ENCODE measurements at regions of chr12 and their contacts with region 1.

Region 1: GRCh38 chr12:95072900-95073697 is at the start of gene NR2C1:
- DNase-seq: peak; percentile 80 to 94 (median 92)
- H3K4me3 ChIP-seq: peak within 1 kb of the TSS; percentile 65 to 99 (median 94)
- H3K27ac ChIP-seq: peak within 1 kb of the TSS; percentile 51 to 98 (median 90)
- H3K27me3 ChIP-seq: no peaks in the 10 kb centered on the region
- CTCF ChIP-seq: no peak
- total RNA-seq, gene NR2C1: 38.6 to 107 (median 57.8) TPM

Region 2: DNA sequence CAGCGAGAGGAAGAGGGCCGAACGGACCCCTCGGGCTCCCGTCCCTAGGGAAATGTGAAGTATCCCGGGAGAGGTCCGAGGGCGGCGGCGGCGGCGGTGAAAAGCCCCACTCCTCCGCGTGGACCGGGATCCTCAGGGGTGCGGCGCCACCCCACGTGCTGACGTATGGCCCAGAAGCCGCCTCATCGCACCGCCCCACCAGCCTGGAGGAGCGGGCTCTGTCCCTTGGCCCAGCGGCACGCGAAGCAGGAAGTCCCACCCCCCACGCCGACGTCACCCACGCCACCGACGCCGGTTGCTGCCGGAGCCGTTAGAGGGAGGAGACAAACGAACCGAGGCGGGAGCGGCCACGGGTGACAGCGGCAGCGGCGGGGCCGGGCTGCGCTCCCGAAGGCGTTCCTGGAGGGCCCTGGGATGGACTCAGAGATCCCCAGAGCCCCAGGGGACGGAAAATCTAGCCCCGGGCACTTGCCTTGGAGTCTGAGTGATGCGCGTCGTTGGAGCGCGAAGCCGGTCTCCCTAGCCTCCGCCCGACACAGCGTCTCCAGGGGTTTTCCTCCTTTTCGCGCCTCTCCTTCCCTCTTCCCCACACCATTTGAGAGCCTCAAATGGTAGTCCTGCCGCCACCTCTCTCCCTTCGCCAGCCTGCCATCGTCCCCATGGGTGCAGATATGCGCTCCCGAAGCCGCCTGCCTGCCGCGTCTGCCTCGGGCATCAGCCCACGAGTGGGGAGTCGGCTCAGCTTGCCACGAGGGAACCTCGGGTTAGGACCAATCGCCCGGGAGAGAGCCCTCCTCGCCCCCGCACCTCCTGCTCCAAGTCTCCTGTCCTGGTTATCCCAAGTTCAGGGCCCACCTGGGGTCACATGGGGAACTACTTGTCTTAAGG is 613.1 kb before region 1 on chr12 and contains the start of gene CEP83:
- intact Hi-C with region 1: loop called in 1 of 2 experiments (anchors 1 kb)
- DNase-seq: peak; percentile 93 to 99 (median 96)
- H3K4me3 ChIP-seq: peak within 1 kb of the TSS; percentile 55 to 96 (median 87)
- H3K27ac ChIP-seq: peak within 1 kb of the TSS in 58 of 59 donors; percentile 9 to 92 (median 83)
- H3K27me3 ChIP-seq: no peaks in the 10 kb centered on the region
- CTCF ChIP-seq: peak in 30 of 56 donors; percentile 2 to 52 (median 22)
- total RNA-seq, gene CEP83: 10.1 to 25.9 (median 16.7) TPM

Region 3: DNA sequence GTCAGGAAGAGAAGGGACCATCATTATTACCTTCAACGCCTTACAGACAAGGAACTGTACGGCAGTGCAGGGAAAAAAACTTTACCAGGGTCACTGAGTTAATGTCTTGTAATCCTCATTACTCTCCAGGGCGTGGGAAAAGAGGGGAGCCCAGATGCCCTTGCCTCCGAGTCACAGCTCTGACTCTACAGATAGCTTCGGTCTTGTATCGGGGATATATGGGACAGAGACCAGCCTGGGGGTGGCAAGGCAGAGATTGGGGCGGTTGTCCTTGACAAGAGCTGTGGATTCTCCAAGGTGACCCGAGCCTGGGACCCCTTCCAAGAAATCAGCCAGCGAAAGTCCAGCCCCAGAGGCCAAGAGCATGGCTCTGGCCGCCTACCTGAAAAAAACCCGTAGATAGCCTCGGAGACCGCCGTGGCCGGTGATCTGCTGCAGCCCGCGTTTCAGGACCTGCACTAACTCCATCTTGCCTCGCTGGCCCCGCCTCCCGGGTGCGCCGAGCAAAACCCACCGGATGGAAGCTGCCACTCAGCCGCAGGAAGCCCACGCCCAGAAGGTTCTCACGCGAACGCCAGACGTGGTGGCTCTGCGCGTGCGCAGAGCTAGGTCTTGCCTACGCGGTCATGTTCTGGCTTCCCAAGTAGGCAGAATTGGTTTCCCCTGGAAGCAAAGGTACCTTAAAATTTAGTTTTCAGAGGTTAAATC is 69.7 kb before region 1 on chr12 and contains the start of gene NDUFA12:
- intact Hi-C with region 1: loop called in 1 of 2 experiments (anchors 5 kb)
- DNase-seq: peak; percentile 89 to 96 (median 95)
- H3K4me3 ChIP-seq: peak within 1 kb of the TSS; percentile 63 to 98 (median 88)
- H3K27ac ChIP-seq: peak within 1 kb of the TSS; percentile 51 to 95 (median 86)
- H3K27me3 ChIP-seq: no peaks in the 10 kb centered on the region
- CTCF ChIP-seq: peak in 35 of 56 donors; percentile 11 to 49 (median 25)
- total RNA-seq, gene NDUFA12: 53.8 to 149 (median 106) TPM

Region 4: GRCh38 chr12:95473884-95474659 is 401.0 kb after region 1 on chr12 and contains the start of gene METAP2:
- intact Hi-C with region 1: loop called (anchors 1 to 5 kb)
- DNase-seq: peak; percentile 92 to 98 (median 96)
- H3K4me3 ChIP-seq: peak within 1 kb of the TSS; percentile 65 to 100 (median 96)
- H3K27ac ChIP-seq: peak within 1 kb of the TSS; percentile 59 to 97 (median 91)
- H3K27me3 ChIP-seq: no peaks in the 10 kb centered on the region
- CTCF ChIP-seq: peak in 36 of 56 donors; percentile 4 to 55 (median 25)
- total RNA-seq, gene METAP2: 38.9 to 82.5 (median 54.8) TPM